ENCODE measurements at regions of chr2 and their contacts with region 1.

Region 1: GRCh38 chr2:73176881-73177644 is 25.3 kb upstream of the NOTO start:
- DNase-seq: peak; percentile 87
- H3K4me3 ChIP-seq: peak overlapping the region; percentile 13 to 42 (median 18)
- H3K27ac ChIP-seq: peak overlapping the region; percentile 11
- H3K4me1 ChIP-seq: peaks cover 32% of the 10 kb centered on the region
- H3K27me3 ChIP-seq: peaks cover 7 to 14% of the 10 kb centered on the region in 2 experiments
- CTCF ChIP-seq: peak; percentile 98 to 99
- POLR2A ChIP-seq: no peak

Region 2: GRCh38 chr2:72887754-72888437 is 289.2 kb before region 1 on chr2:
- CTCF ChIA-PET with region 1: interaction called, 261 read pairs
- POLR2A ChIA-PET with region 1: interaction called, 5 read pairs
- dilution Hi-C with region 1: no loop called
- intact Hi-C with region 1: loop called (anchors 1 kb)
- DNase-seq: peak; percentile 84
- H3K4me3 ChIP-seq: peak overlapping the region; percentile 54 to 81 (median 73)
- H3K27ac ChIP-seq: peak overlapping the region; percentile 74
- H3K4me1 ChIP-seq: peaks cover 13% of the 10 kb centered on the region
- H3K27me3 ChIP-seq: no peaks in the 10 kb centered on the region
- CTCF ChIP-seq: peak; percentile 97 to 99
- POLR2A ChIP-seq: no peak

Region 3: DNA sequence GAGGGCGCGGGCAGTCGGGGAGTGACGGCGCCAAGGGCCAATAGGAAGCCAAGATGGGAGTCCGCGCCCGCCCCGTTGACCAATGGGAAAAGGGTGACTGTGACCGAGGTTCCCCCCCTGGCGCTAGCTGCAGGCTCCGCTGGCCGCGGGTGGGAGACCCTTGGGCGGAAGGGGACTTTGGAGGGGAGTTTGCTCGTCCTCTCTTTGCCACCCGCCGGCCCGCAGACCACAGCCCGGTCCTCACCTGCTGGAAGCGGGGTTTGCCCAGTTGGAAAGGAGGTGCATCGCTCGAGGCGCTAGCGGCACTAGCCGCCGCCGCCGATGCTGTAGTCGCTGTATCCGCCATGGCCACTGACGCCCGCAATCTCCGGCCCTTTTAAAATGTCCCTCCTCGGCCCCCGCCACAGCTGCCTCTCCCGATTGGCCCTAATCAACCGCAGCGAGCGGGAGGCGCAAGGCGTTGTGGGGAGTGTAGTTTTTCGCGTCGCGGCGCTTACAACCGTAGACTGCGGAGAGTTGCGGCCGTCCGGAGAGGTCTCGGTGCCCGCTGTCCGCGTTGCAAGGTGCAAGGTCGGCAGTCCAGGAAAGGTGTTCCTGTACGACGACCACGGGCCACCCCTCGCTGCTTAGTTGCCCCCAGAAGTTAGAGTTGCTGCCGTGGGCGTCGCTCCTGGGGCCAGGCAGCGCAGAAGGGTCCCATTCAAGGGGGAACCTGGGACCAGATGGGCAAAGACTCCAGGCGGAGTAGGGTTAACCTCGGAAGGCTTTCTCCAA is 105.5 kb before region 1 on chr2 and contains the start of gene SFXN5:
- CTCF ChIA-PET with region 1: interaction called, 10 read pairs
- POLR2A ChIA-PET with region 1: no interaction called
- dilution Hi-C with region 1: no loop called
- intact Hi-C with region 1: no loop called
- DNase-seq: peak; percentile 94
- H3K4me3 ChIP-seq: peak within 1 kb of the TSS; percentile 77 to 86 (median 80)
- H3K27ac ChIP-seq: peak within 1 kb of the TSS; percentile 75
- H3K4me1 ChIP-seq: peaks cover 12% of the 10 kb centered on the region
- H3K27me3 ChIP-seq: no peaks in the 10 kb centered on the region
- CTCF ChIP-seq: peak in 1 of 2 donors; percentile 23
- POLR2A ChIP-seq: peak; percentile 71
- total RNA-seq, gene SFXN5: 24.6 and 28.6 TPM in 2 replicates

Region 4: DNA sequence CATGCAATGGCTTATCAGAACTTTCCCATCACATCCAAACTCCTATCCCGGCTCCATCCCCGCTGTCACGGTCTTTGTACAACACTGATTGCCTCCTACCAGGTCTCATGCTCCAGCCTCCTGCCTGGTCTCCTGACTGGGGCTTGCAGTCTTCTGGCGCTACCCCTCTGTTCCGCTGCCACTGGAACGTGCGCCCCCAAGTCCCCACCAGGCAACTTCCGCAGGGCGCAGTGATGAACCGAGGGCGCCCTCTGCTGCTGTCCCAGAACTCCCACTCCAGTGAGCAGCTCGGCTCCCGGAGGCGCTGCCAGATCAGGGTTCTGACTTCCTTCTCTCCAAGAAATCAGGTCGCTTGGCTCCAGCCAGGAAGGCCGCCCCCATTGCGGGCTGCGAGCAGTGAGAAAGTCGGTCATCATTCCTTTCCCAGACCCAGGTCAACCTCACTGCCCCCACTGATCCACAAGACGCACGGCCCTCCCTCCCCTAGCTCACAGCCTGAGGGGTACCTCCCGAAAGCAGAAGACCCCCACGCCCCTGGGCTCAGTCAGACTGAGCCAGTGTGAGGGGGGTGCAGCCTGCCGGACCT is 20.4 kb before region 1 on chr2:
- CTCF ChIA-PET with region 1: interaction called, 23 read pairs
- POLR2A ChIA-PET with region 1: no interaction called
- dilution Hi-C with region 1: no loop called
- intact Hi-C with region 1: no loop called
- DNase-seq: peak; percentile 63
- H3K4me3 ChIP-seq: no peak overlapping the region
- H3K27ac ChIP-seq: no peak overlapping the region
- H3K4me1 ChIP-seq: peaks cover 4% of the 10 kb centered on the region
- H3K27me3 ChIP-seq: no peaks in the 10 kb centered on the region
- CTCF ChIP-seq: peak; percentile 78 to 93
- POLR2A ChIP-seq: no peak

Region 5: DNA sequence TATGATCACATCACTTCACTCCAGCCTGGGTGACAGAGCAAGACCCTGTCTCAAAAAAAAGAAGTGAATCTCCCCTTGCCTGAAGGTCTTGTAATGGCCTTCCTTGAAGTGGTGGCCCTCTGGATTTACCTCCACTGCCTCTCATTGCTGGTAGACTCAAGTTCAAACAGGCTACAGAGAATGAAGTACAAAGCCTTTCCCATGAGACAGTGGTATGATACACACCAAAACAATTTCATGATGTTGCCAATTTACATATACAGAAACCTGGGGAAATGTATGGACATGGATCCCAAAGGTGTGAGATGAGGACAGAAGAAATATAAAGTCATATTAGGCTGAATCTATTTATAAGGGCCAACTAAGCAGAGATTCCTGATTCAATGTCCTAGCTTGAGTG is 20.5 kb after region 1 on chr2:
- CTCF ChIA-PET with region 1: interaction called, 11 read pairs
- POLR2A ChIA-PET with region 1: no interaction called
- dilution Hi-C with region 1: no loop called
- intact Hi-C with region 1: no loop called
- DNase-seq: no peak
- H3K4me3 ChIP-seq: no peak overlapping the region
- H3K27ac ChIP-seq: no peak overlapping the region
- H3K4me1 ChIP-seq: peaks cover under 1% of the 10 kb centered on the region
- H3K27me3 ChIP-seq: peaks cover 26 to 36% of the 10 kb centered on the region in 2 experiments
- CTCF ChIP-seq: no peak
- POLR2A ChIP-seq: no peak